ENCODE measurements at regions of chr14 and their contacts with region 1.

Region 1: GRCh38 chr14:21104448-21105060 is 3.7 kb downstream of the TMEM253 start:
- DNase-seq: peak; percentile 83 to 93
- H3K4me3 ChIP-seq: peak overlapping the region; percentile 62 to 71 (median 66)
- H3K27ac ChIP-seq: peak overlapping the region; percentile 93 to 99 (median 97)
- H3K4me1 ChIP-seq: peaks cover 22 to 62% (median 42%) of the 10 kb centered on the region in 4 donors
- H3K27me3 ChIP-seq: no peaks in the 10 kb centered on the region
- CTCF ChIP-seq: peak in 6 of 7 experiments; percentile 17 to 97 (median 94)
- EP300 ChIP-seq: no peak
- POLR2A ChIP-seq: no peak

Region 2: GRCh38 chr14:21068521-21069387 is 35.8 kb before region 1 on chr14:
- intact Hi-C with region 1: loop called (anchors 5 kb)
- DNase-seq: peak; percentile 63 to 89
- H3K4me3 ChIP-seq: peak overlapping the region; percentile 77 to 90 (median 80)
- H3K27ac ChIP-seq: peak overlapping the region in 4 of 5 donors; percentile 86 to 94 (median 92)
- H3K4me1 ChIP-seq: peaks cover 37 to 49% (median 47%) of the 10 kb centered on the region in 4 donors
- H3K27me3 ChIP-seq: peaks cover 0 to 19% (median 6%) of the 10 kb centered on the region in 3 donors
- CTCF ChIP-seq: peak in 5 of 7 experiments; percentile 53 to 73 (median 57)
- EP300 ChIP-seq: no peak
- POLR2A ChIP-seq: no peak

Region 3: DNA sequence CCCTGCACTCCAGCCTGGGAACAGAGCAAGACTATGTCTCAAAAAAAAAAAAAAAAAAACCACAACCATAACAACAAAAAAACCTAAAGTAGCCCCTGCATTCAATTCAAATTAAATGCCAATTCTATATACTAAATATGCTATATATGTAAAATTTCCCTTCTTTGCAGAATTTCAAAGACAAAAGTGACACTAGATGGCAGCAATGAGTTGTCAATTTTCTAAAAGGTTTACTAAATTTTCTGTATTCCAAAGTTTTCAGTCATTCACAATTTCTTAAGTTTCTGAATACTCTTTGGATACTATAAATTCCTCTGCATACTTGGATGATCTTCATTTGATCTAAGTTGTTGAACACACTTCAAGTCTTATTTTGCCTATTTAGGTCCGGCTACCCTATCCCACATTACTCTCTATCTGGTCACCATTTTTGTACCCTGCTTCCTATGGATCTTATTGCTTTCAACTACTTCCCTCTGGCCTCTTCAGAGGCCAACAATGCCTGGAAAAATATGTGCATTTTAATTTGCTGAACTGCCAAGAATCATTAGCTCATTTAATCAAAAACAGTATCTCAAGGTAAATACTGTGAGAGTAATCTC is 136.8 kb after region 1 on chr14:
- intact Hi-C with region 1: no loop called
- DNase-seq: peak in 1 of 2 donors; percentile 41
- H3K4me3 ChIP-seq: no peak overlapping the region
- H3K27ac ChIP-seq: no peak overlapping the region
- H3K4me1 ChIP-seq: peaks cover 25 to 100% (median 63%) of the 10 kb centered on the region in 4 donors
- H3K27me3 ChIP-seq: no peaks in the 10 kb centered on the region
- CTCF ChIP-seq: peak in 2 of 7 experiments; percentile 28 to 29
- EP300 ChIP-seq: no peak
- POLR2A ChIP-seq: no peak

Region 4: DNA sequence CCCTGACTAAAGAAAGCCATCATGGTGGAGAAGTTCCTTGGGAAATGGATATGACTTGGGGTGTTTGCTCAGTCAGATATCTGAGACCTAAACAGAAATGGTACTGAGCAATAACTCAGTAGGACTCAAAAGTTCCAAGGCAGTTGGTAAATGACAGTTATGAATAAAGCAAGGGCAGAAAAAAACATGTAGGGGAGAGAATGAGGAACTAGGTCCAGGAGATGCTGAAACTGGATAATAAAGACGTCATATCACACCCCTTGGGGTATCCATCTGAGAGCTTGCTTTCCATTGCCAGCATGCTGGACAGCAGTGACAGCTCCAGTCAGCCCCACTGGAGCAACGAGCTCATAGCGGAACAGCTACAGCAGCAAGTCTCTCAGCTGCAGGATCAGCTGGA is 212.8 kb after region 1 on chr14:
- intact Hi-C with region 1: no loop called
- DNase-seq: peak in 1 of 2 donors; percentile 5
- H3K4me3 ChIP-seq: no peak overlapping the region
- H3K27ac ChIP-seq: no peak overlapping the region
- H3K4me1 ChIP-seq: no peaks in the 10 kb centered on the region
- H3K27me3 ChIP-seq: no peaks in the 10 kb centered on the region
- CTCF ChIP-seq: no peak
- EP300 ChIP-seq: no peak
- POLR2A ChIP-seq: no peak

Measured in stomach (tissue), 19 donors.